ENCODE measurements at regions of chr1 and their contacts with region 1.

Region 1: GRCh38 chr1:204565617-204566582 is 49.7 kb downstream of the MDM4 start:
- DNase-seq: peak; percentile 77
- ATAC-seq: peak; percentile 80
- H3K4me3 Mint-ChIP-seq: no peak overlapping the region
- H3K27ac Mint-ChIP-seq: peak overlapping the region; percentile 59
- H3K4me1 Mint-ChIP-seq: peaks cover 56% of the 10 kb centered on the region
- H3K27me3 Mint-ChIP-seq: no peaks in the 10 kb centered on the region

Region 2: GRCh38 chr1:204314171-204314895 is 251.6 kb before region 1 on chr1:
- CTCF ChIA-PET with region 1: no interaction called
- POLR2A ChIA-PET with region 1: no interaction called
- DNase-seq: no peak
- ATAC-seq: no peak
- H3K4me3 Mint-ChIP-seq: no peak overlapping the region
- H3K27ac Mint-ChIP-seq: no peak overlapping the region
- H3K4me1 Mint-ChIP-seq: no peaks in the 10 kb centered on the region
- H3K27me3 Mint-ChIP-seq: peaks cover 6% of the 10 kb centered on the region

Region 3: DNA sequence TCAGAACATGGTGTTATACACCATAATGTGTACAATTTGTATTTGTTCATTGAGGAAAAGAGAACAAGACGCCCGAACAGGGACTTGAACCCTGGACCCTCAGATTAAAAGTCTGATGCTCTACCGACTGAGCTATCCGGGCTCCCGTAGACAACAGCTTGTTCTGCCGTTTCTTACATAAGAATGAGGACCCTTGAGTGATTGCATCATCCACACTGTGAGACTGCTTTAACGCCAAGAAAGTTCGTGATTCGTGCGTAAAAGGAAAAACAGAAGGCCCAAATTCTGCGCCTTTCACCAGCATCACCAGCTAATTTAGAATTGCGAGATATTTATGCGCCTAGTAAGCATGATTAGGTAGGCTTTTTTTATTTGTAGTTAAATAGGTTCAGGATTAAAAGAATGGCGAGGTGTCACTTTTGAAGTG is 58.9 kb before region 1 on chr1:
- CTCF ChIA-PET with region 1: interaction called, 27 read pairs
- POLR2A ChIA-PET with region 1: interaction called, 5 read pairs
- DNase-seq: peak; percentile 94
- ATAC-seq: peak; percentile 82
- H3K4me3 Mint-ChIP-seq: peak overlapping the region; percentile 88
- H3K27ac Mint-ChIP-seq: peak overlapping the region; percentile 97
- H3K4me1 Mint-ChIP-seq: peaks cover 42% of the 10 kb centered on the region
- H3K27me3 Mint-ChIP-seq: no peaks in the 10 kb centered on the region

Region 4: GRCh38 chr1:204523605-204524215 is 42.2 kb before region 1 on chr1:
- CTCF ChIA-PET with region 1: interaction called, 49 read pairs
- POLR2A ChIA-PET with region 1: interaction called, 3 read pairs
- DNase-seq: no peak
- ATAC-seq: no peak
- H3K4me3 Mint-ChIP-seq: no peak overlapping the region
- H3K27ac Mint-ChIP-seq: peak overlapping the region; percentile 9
- H3K4me1 Mint-ChIP-seq: peaks cover 45% of the 10 kb centered on the region
- H3K27me3 Mint-ChIP-seq: no peaks in the 10 kb centered on the region

Region 5: DNA sequence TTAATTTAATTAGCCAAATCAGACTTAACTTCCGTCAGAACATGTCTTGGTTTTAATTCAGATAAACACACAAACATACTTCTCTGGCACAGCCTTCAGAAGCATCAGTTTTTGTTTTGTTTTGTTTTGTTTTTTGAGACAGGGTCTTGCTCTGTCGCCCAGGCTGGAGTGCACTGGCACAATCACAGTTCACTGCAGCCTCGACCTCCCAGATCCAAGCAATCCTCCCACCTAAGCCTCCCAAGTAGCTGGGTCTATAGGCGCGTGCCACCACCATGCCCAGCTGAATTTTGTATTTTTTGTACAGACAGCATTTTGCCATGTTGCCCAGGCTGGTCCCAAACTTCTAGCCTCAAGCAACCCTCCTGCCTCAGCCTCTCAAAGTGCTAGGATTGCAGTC is 15.0 kb before region 1 on chr1:
- CTCF ChIA-PET with region 1: interaction called, 36 read pairs
- POLR2A ChIA-PET with region 1: interaction called, 5 read pairs
- DNase-seq: no peak
- ATAC-seq: no peak
- H3K4me3 Mint-ChIP-seq: no peak overlapping the region
- H3K27ac Mint-ChIP-seq: no peak overlapping the region
- H3K4me1 Mint-ChIP-seq: peaks cover 11% of the 10 kb centered on the region
- H3K27me3 Mint-ChIP-seq: no peaks in the 10 kb centered on the region

Region 6: DNA sequence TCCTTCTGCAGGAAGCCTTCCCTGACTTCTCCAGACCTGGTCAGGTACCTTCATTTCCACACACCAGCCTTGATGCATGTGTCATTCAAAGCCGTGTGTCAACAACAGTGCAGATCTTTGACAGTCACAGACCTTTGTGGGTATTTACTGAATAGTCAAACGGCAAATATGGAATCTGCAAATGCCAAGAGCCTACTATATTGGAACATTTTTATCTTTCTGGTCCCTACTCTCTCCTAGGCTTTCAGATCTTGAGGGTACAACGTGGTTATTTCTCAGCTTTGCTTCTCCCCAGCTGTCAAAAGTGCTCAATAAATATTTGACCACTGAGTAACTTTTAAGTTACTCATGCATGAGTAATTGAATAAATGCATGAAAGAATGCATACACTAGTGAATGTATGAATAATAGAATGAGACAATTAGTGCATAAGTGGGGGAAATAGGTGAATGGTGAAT is 25.7 kb after region 1 on chr1:
- CTCF ChIA-PET with region 1: interaction called, 10 read pairs
- POLR2A ChIA-PET with region 1: no interaction called
- DNase-seq: no peak
- ATAC-seq: no peak
- H3K4me3 Mint-ChIP-seq: no peak overlapping the region
- H3K27ac Mint-ChIP-seq: no peak overlapping the region
- H3K4me1 Mint-ChIP-seq: no peaks in the 10 kb centered on the region
- H3K27me3 Mint-ChIP-seq: no peaks in the 10 kb centered on the region

Region 7: GRCh38 chr1:204673909-204674649 is 108.2 kb after region 1 on chr1:
- CTCF ChIA-PET with region 1: no interaction called
- POLR2A ChIA-PET with region 1: no interaction called
- DNase-seq: no peak
- ATAC-seq: no peak
- H3K4me3 Mint-ChIP-seq: no peak overlapping the region
- H3K27ac Mint-ChIP-seq: no peak overlapping the region
- H3K4me1 Mint-ChIP-seq: no peaks in the 10 kb centered on the region
- H3K27me3 Mint-ChIP-seq: peaks cover 6% of the 10 kb centered on the region

Region 8: GRCh38 chr1:204763706-204764427 is 198.0 kb after region 1 on chr1:
- CTCF ChIA-PET with region 1: interaction called, 147 read pairs
- POLR2A ChIA-PET with region 1: no interaction called
- DNase-seq: peak; percentile 79
- ATAC-seq: peak; percentile 97
- H3K4me3 Mint-ChIP-seq: peak overlapping the region; percentile 32
- H3K27ac Mint-ChIP-seq: no peak overlapping the region
- H3K4me1 Mint-ChIP-seq: peaks cover 9% of the 10 kb centered on the region
- H3K27me3 Mint-ChIP-seq: peaks cover 39% of the 10 kb centered on the region

Measured in activated CD8-positive, alpha-beta T cell treated with anti-CD3 and anti-CD28 coated beads, Interleukin-2, amount 10 ng/mL, durations not matched to agents 7 days and 5 days (primary cell).